Endothelial cell of umbilical vein (primary cell): ENCODE measurements at regions of chr5 and their contacts with region 1.

Region 1: DNA sequence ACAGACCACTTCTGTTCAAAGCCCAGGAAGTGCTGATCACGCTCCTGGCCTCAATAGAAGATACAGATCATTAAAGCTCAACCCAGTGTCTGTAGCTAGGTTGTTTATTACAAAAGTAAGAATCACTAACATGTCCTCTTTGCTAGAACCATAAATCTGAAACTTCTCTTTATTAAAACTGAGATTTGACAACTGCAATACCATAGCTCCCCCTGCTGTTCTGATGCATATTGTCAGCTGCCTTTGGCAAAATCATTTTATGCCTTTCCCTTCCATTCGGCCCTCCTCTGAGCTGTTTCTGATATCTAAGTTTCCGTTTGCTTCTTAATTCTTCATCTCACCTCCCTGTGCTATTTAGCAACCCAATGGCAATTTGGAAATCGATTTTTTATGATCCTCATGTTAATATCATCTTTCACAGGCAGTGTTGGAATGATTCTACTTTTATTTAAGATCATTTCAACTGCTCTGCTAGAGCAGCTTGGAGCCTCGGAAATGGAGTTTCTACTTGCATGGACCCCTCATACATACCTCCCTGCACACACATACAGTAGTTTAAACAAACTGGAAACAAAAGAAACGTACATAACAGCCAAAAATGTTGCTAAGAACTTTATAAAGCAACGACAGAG is 998.8 kb downstream of the MAT2B start:
- DNase-seq: peak; percentile 71
- H3K4me3 ChIP-seq: no peak overlapping the region
- H3K27ac ChIP-seq: no peak overlapping the region
- H3K4me1 ChIP-seq: peaks cover 2% of the 10 kb centered on the region
- H3K27me3 ChIP-seq: no peaks in the 10 kb centered on the region
- CTCF ChIP-seq: peak; percentile 65 to 68
- POLR2A ChIP-seq: no peak

Region 2: DNA sequence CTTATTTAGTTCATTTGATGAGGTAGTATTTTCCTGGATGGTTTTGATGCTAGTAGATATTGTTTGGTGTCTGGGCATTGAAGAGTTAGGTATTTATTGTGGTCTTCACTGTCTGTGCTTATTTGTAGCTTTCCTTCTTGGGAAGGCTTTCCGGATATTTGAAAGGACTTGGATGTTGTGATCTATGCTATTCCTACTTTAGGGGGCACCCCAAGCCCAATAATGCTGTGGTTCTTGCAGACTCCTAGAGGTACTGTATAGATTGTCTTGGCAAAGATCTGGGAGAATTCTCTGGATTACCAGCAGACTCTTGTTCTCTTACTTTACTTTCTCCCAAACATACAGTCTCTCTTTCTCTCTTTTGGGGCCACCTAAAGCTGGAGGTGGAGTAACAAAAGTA is 683.1 kb before region 1 on chr5:
- CTCF ChIA-PET with region 1: no interaction called
- POLR2A ChIA-PET with region 1: no interaction called
- dilution Hi-C with region 1: no loop called
- intact Hi-C with region 1: loop called (anchors 2 kb)
- DNase-seq: no peak
- H3K4me3 ChIP-seq: no peak overlapping the region
- H3K27ac ChIP-seq: no peak overlapping the region
- H3K4me1 ChIP-seq: no peaks in the 10 kb centered on the region
- H3K27me3 ChIP-seq: no peaks in the 10 kb centered on the region
- CTCF ChIP-seq: no peak
- POLR2A ChIP-seq: no peak

Region 3: DNA sequence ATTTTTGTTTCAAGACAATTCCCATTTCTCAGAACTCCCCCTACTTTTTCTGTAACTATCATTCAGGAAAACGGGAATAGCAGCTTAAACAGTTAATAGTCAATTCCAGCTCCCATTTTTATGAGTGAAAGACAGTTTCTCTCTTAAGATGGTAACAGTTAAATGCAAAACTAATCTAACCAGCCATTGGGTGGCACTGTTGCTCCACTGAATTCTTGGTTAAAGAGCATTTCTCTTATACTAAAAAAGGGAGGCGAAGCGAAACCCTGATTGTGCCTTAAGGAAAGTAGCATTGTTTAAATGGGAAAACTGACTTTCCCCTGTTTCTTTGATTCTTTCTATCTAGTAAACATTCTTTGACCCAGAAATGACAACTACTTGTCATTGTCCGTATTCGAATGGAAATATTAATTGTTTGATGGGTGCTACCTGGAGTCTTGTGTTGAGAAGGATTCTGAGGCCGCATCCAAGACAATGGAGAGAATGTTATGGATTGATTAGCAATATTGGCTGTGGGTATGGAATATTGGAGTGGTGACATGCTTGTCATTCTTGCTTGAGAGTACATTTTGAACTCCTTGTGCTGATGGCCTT is 491.1 kb before region 1 on chr5:
- CTCF ChIA-PET with region 1: interaction called, 95 read pairs
- POLR2A ChIA-PET with region 1: no interaction called
- dilution Hi-C with region 1: no loop called
- intact Hi-C with region 1: loop called (anchors 1 kb)
- DNase-seq: peak; percentile 88
- H3K4me3 ChIP-seq: no peak overlapping the region
- H3K27ac ChIP-seq: peak overlapping the region; percentile 47
- H3K4me1 ChIP-seq: peaks cover 11% of the 10 kb centered on the region
- H3K27me3 ChIP-seq: no peaks in the 10 kb centered on the region
- CTCF ChIP-seq: peak; percentile 45 to 59
- POLR2A ChIP-seq: no peak

Region 4: GRCh38 chr5:164422400-164422799 is 81.9 kb before region 1 on chr5:
- CTCF ChIA-PET with region 1: interaction called, 10 read pairs
- POLR2A ChIA-PET with region 1: no interaction called
- dilution Hi-C with region 1: no loop called
- intact Hi-C with region 1: loop called (anchors 5 kb)
- DNase-seq: peak; percentile 43
- H3K4me3 ChIP-seq: no peak overlapping the region
- H3K27ac ChIP-seq: no peak overlapping the region
- H3K4me1 ChIP-seq: no peaks in the 10 kb centered on the region
- H3K27me3 ChIP-seq: no peaks in the 10 kb centered on the region
- CTCF ChIP-seq: peak in 1 of 2 donors; percentile 36
- POLR2A ChIP-seq: no peak

Region 5: GRCh38 chr5:165209086-165209727 is 705.0 kb after region 1 on chr5:
- CTCF ChIA-PET with region 1: no interaction called
- POLR2A ChIA-PET with region 1: no interaction called
- dilution Hi-C with region 1: no loop called
- intact Hi-C with region 1: loop called (anchors 1 kb)
- DNase-seq: peak; percentile 24
- H3K4me3 ChIP-seq: no peak overlapping the region
- H3K27ac ChIP-seq: no peak overlapping the region
- H3K4me1 ChIP-seq: no peaks in the 10 kb centered on the region
- H3K27me3 ChIP-seq: no peaks in the 10 kb centered on the region
- CTCF ChIP-seq: peak; percentile 38 to 46
- POLR2A ChIP-seq: no peak